Aorta (tissue), 5 donors: ENCODE measurements at regions of chr19 and their contacts with region 1.

Region 1: DNA sequence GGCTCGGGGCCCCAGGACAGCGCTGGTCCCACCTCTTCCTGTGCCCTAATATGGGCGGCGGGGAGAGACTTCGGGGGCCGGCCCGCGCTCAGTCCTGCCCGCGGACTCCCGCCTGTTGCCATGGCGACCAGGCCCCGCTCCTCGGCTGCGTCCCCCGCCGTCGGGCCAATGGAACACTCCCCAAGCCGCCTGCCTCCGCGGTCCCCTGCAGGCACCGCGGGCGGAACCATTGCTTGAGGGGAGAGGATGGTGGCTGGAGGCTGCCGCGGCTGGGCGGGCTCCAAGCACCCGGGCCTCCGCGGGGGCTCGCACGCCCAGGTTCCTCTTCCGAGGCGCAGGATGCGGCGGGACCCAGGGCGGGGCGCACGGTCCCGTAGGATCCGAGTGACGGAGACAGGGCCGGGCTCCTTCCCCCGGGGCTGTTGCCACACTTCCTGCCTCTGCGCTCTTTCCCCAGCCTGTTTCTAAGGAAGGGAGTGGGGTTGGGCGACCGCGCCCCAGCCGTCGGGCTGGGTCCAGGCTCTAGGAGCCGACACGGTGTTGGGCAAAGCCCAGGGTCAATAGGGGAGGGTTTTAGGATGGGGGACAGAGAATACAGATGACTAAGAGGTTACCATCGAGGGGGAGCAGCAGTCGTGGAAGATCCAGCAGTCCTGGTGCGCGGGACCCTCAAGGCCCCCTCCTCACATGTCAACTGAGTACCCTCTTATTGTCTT is 1.2 kb upstream of the JUNB start:
- DNase-seq: peak; percentile 99
- ATAC-seq: peak; percentile 76
- H3K4me3 ChIP-seq: peak overlapping the region; percentile 45 to 57
- H3K27ac ChIP-seq: peak overlapping the region; percentile 95 to 96
- H3K4me1 ChIP-seq: no peaks in the 10 kb centered on the region
- H3K27me3 ChIP-seq: peaks cover 0 to 4% of the 10 kb centered on the region in 2 donors

Region 2: GRCh38 chr19:11535792-11536595 is 1254.1 kb before region 1 on chr19:
- intact Hi-C with region 1: loop called in 1 of 2 experiments (anchors 5 kb)
- DNase-seq: peak; percentile 93 to 97
- ATAC-seq: peak; percentile 89
- H3K4me3 ChIP-seq: peak overlapping the region in 1 of 2 donors; percentile 9
- H3K27ac ChIP-seq: peak overlapping the region; percentile 96 to 97
- H3K4me1 ChIP-seq: no peaks in the 10 kb centered on the region
- H3K27me3 ChIP-seq: no peaks in the 10 kb centered on the region

Region 3: DNA sequence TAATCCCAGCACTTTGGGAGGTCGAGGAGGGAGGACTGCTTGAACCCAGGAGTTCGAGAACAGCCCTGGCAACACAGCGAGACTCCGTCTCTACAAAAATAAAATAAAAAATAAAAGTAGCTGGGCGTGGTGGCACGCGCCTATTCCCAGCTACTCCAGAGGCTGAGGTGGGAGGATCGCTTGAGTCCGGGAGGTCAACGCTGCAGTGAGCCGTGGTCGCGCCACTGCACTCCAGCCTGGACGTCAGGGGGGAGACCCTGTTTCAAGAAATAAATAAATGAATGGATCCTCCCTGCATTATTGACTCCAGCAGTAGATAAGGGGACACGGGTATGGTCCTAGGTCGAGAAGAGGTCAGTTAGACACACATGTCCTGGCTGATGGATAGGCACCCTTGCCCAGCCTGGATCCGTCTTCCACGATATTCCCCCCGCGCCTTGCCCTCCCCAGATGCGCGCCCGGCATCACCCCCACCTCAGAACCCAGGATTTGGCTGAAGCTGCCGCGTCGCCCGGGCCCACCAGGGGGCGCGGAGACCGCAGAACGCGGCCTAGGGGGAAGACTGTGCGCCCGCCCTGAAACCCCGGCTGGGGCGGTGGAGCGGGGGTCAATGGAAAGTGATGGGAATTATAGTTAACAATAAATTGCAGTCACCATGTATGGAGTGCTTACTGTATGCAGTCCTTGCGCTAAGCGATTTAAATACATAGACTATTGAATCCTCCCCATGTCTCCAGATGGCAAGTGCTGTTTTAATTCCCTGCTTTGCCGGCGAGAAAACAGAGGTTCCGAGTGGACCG is 12.6 kb before region 1 on chr19:
- intact Hi-C with region 1: loop called (anchors 1 kb)
- DNase-seq: peak; percentile 89 to 95
- ATAC-seq: peak; percentile 85
- H3K4me3 ChIP-seq: peak overlapping the region; percentile 19 to 55
- H3K27ac ChIP-seq: peak overlapping the region; percentile 83 to 84
- H3K4me1 ChIP-seq: no peaks in the 10 kb centered on the region
- H3K27me3 ChIP-seq: no peaks in the 10 kb centered on the region

Region 4: DNA sequence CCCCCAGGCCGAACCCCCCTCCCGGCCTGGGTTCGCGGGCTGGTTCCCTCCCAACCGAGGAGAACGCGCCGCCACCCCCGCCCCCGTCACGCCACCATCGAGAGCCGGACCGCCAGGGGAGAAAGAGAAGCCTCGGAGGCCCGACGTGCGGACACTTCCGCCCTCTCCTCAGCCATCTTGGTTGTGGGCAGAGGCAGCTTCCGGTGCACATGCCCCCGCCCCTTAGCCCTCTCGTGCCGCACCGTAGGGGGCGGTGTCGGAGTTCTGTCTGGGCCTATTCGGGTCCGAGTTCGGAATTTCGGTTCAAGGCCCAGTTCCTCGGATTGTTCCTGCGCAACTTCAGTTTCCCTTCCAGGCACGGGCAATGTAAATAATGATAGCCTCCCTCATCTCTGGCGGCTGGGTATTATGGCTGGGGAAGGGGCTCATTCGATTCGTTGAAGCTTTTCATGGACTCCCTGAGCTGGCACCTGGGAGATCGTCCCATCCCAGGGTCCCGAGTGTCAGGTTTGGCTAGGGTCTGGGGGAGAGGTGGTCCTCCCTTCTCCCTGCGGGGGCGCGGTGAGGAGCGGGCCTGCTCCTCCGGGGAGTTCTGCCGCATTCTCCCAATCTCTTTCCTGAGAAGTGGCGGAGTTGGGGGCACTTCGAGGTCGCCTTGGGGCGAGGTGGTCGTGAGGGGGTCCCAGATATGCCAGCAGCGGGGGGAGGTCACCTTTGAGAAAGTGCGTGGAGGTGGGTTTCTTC is 360.3 kb after region 1 on chr19 and contains the starts of genes IER2 and STX10:
- intact Hi-C with region 1: loop called in 1 of 2 experiments (anchors 5 kb)
- DNase-seq: peak; percentile 98 to 99
- ATAC-seq: peak; percentile 85
- H3K4me3 ChIP-seq: peak within 1 kb of the TSS; percentile 75 to 82
- H3K27ac ChIP-seq: peak within 1 kb of the TSS; percentile 92 to 93
- H3K4me1 ChIP-seq: no peaks in the 10 kb centered on the region
- H3K27me3 ChIP-seq: peaks cover 0 to 3% of the 10 kb centered on the region in 2 donors
- total RNA-seq, gene IER2: 143 to 239 TPM
- total RNA-seq, gene STX10: 33.0 to 47.4 TPM

Region 5: GRCh38 chr19:13846557-13847406 is 1056.7 kb after region 1 on chr19:
- intact Hi-C with region 1: loop called (anchors 10 kb)
- DNase-seq: peak; percentile 96 to 97
- ATAC-seq: peak; percentile 76
- H3K4me3 ChIP-seq: no peak overlapping the region
- H3K27ac ChIP-seq: peak overlapping the region; percentile 99 to 100
- H3K4me1 ChIP-seq: no peaks in the 10 kb centered on the region
- H3K27me3 ChIP-seq: no peaks in the 10 kb centered on the region